CD8-positive, alpha-beta T cell (primary cell): ENCODE measurements at regions of chr15 and their contacts with region 1.

Region 1: DNA sequence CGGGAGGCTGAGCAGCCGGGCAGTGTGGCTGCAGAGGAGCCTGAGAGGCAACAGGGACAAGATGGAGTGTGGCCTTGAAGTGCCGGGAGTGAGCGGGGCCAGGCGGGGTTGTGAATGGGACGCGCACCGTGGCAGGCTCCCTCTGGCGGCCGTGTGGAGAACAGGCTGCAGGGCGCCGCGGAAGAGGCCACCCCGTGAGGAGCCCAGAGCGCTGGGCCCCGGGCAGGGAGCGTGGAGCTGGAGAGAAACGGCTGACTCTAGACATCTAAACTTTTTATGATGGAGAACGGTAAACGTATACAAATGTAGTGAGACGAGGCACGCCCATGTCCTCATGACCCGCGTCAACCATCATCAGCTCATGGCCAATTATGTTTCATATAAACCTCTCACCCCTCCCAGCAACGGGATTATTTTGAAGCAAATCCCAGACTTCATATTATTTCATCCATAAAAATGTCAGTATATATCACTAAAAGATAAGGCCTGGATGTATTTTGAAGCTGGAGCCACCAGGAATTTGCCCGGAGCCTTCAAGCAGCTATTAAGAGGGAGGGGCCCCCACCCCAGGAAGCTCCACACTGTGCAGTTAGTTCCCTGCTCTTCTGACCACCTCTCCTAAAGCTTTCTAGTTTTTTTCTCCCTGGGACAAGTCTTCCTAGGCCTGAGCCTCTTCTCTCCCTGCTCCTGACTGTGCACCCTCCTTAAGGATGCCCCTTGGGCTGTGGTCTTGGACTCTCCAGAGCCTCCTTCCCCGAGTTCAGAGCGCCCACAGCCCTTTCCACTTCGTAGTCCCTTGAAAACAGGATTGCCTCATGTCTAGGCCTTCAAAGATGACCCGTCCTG is 149.4 kb downstream of the SMAD6 start:
- DNase-seq: peak; percentile 48 to 80 (median 71)
- ATAC-seq: peak; percentile 98
- H3K4me3 ChIP-seq: no peak overlapping the region
- H3K4me3 Mint-ChIP-seq: peak overlapping the region; percentile 58
- H3K27ac ChIP-seq: no peak overlapping the region
- H3K27ac Mint-ChIP-seq: no peak overlapping the region
- H3K4me1 ChIP-seq: peaks cover 7% of the 10 kb centered on the region
- H3K4me1 Mint-ChIP-seq: peaks cover 9% of the 10 kb centered on the region
- H3K27me3 ChIP-seq: no peaks in the 10 kb centered on the region
- H3K27me3 Mint-ChIP-seq: peaks cover 17% of the 10 kb centered on the region
- CTCF ChIP-seq: peak; percentile 93

Region 2: DNA sequence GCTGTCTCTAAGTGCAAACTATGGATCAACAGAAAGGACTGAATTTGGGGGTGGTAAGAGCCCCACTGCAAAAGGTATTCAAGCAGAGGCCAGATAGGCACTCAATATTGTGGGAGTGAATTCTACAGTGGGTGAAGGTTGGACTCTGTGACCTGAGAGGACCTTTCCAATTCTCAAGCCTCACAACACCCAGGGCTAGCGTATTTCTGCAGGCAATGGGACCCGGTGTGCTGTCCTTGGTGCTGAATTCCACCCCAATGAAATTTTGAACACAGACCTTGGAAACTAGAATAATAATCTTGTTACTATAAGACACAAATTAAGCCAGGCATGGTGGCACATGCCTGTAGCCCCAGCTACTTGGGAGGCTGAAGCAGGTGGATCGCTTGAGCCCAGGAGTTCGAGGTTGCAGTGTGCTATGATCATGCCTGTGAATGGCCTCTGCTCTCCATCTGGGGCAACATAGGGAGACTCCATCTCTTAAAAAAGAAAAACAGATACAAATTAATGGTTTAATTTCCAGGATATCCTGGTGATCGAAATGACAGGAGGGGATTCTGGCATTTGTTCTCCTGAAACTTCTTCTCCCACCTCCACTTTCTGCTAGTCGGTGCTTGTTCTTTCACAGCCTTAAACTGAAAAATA is 846.7 kb before region 1 on chr15:
- CTCF ChIA-PET with region 1: no interaction called
- POLR2A ChIA-PET with region 1: no interaction called
- intact Hi-C with region 1: no loop called
- DNase-seq: no peak
- ATAC-seq: no peak
- H3K4me3 ChIP-seq: no peak overlapping the region
- H3K4me3 Mint-ChIP-seq: no peak overlapping the region
- H3K27ac ChIP-seq: no peak overlapping the region
- H3K27ac Mint-ChIP-seq: no peak overlapping the region
- H3K4me1 ChIP-seq: no peaks in the 10 kb centered on the region
- H3K4me1 Mint-ChIP-seq: no peaks in the 10 kb centered on the region
- H3K27me3 ChIP-seq: no peaks in the 10 kb centered on the region
- H3K27me3 Mint-ChIP-seq: peaks cover 28% of the 10 kb centered on the region
- CTCF ChIP-seq: no peak

Region 3: DNA sequence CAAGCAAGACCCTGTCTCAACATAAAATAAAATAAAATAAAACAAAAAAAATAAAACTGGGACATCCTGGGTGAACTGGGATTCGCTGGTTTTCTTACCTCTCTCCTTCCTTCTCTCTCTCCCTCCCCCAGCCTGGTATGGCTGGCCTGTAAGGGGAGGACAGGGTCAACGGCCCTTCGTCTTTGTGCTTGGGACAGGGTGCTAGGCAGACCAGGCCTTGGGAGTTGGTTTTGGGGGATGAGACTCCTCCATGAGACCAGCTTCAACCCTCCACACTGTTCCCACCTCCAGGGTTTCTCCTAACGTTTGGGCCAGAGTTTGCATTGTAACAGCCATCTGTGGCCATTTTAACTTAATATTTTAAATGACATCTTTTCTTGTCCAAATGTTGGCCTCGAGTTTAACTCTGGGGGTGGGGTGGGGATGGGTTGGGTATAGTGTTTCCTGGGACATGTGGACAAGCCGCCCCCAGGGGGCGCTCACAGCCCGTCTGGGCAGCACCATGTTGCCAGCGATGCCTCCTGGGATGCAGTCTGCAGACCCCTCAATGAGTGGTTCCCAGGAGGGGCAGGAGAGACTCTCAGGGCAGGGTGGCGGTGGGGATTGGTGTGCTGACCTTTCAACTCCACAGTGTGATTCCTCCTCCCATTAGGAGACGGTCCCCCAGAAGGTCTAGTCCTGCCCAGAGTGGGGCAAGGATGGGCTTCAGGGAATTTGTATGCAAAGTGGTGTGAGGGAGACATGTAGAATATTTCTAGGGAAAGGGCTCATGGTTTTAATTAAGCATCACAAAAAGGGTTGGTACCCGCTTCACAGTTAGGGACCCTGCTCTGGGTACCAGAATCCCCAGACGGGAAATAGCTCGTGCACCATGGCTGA is 247.9 kb before region 1 on chr15:
- CTCF ChIA-PET with region 1: interaction called, 48 read pairs
- POLR2A ChIA-PET with region 1: no interaction called
- intact Hi-C with region 1: loop called in 1 of 2 experiments (anchors 1 kb)
- DNase-seq: peak; percentile 23 to 76 (median 65)
- ATAC-seq: peak; percentile 48
- H3K4me3 ChIP-seq: no peak overlapping the region
- H3K4me3 Mint-ChIP-seq: no peak overlapping the region
- H3K27ac ChIP-seq: no peak overlapping the region
- H3K27ac Mint-ChIP-seq: no peak overlapping the region
- H3K4me1 ChIP-seq: peaks cover under 1% of the 10 kb centered on the region
- H3K4me1 Mint-ChIP-seq: peaks cover 1% of the 10 kb centered on the region
- H3K27me3 ChIP-seq: no peaks in the 10 kb centered on the region
- H3K27me3 Mint-ChIP-seq: peaks cover 5% of the 10 kb centered on the region
- CTCF ChIP-seq: peak; percentile 79

Region 4: GRCh38 chr15:66619151-66619903 is 232.1 kb before region 1 on chr15:
- CTCF ChIA-PET with region 1: interaction called, 17 read pairs
- POLR2A ChIA-PET with region 1: no interaction called
- intact Hi-C with region 1: no loop called
- DNase-seq: peak in 6 of 9 experiments; percentile 20 to 57 (median 31)
- ATAC-seq: no peak
- H3K4me3 ChIP-seq: no peak overlapping the region
- H3K4me3 Mint-ChIP-seq: no peak overlapping the region
- H3K27ac ChIP-seq: no peak overlapping the region
- H3K27ac Mint-ChIP-seq: no peak overlapping the region
- H3K4me1 ChIP-seq: no peaks in the 10 kb centered on the region
- H3K4me1 Mint-ChIP-seq: peaks cover 4% of the 10 kb centered on the region
- H3K27me3 ChIP-seq: peaks cover 0 to 5% of the 10 kb centered on the region in 2 experiments
- H3K27me3 Mint-ChIP-seq: peaks cover 14% of the 10 kb centered on the region
- CTCF ChIP-seq: peak; percentile 52

Region 5: DNA sequence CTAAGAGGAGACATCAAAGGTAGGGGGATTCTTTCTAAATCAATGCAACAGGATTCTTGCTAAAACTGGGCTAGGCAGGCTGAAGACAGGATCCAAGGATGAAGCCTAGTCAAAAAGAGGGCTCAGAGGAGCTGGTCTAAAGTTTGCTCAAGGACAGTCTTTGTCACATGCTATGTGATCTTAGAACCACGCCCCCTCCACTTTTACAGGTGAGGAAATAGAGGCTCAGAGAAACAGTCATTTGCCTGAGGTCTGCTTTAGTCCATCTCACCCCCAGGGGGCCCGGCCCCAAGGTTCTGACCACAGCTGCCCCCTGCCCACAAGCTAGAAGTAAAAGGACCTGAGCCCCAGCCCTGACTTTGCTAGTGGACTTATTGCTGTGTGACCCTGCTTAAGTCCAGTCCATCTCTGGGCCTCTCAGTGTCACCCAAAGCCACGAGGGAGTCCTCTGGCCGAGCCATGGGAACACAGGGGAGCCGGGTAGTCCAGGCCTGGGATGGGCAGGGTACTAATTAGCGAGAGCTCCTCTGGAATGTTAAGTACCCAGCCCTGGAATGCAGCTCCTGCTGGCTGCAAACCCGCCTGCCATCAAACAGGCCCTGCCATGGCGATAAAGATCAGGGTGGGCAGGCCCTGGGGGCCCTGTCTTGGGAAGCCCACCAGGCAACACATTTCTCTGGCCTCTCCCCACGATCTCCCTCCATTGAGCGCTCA is 16.7 kb before region 1 on chr15:
- CTCF ChIA-PET with region 1: interaction called, 11 read pairs
- POLR2A ChIA-PET with region 1: no interaction called
- intact Hi-C with region 1: no loop called
- DNase-seq: no peak
- ATAC-seq: no peak
- H3K4me3 ChIP-seq: no peak overlapping the region
- H3K4me3 Mint-ChIP-seq: no peak overlapping the region
- H3K27ac ChIP-seq: no peak overlapping the region
- H3K27ac Mint-ChIP-seq: no peak overlapping the region
- H3K4me1 ChIP-seq: no peaks in the 10 kb centered on the region
- H3K4me1 Mint-ChIP-seq: no peaks in the 10 kb centered on the region
- H3K27me3 ChIP-seq: no peaks in the 10 kb centered on the region
- H3K27me3 Mint-ChIP-seq: no peaks in the 10 kb centered on the region
- CTCF ChIP-seq: no peak

Region 6: GRCh38 chr15:66862878-66863335 is 11.5 kb after region 1 on chr15:
- CTCF ChIA-PET with region 1: interaction called, 20 read pairs
- POLR2A ChIA-PET with region 1: no interaction called
- intact Hi-C with region 1: no loop called
- DNase-seq: peak; percentile 50 to 78 (median 66)
- ATAC-seq: peak; percentile 85
- H3K4me3 ChIP-seq: no peak overlapping the region
- H3K4me3 Mint-ChIP-seq: no peak overlapping the region
- H3K27ac ChIP-seq: no peak overlapping the region
- H3K27ac Mint-ChIP-seq: no peak overlapping the region
- H3K4me1 ChIP-seq: no peaks in the 10 kb centered on the region
- H3K4me1 Mint-ChIP-seq: no peaks in the 10 kb centered on the region
- H3K27me3 ChIP-seq: peaks cover 0 to 3% of the 10 kb centered on the region in 2 experiments
- H3K27me3 Mint-ChIP-seq: peaks cover 47% of the 10 kb centered on the region
- CTCF ChIP-seq: peak; percentile 73

Region 7: GRCh38 chr15:66873856-66874255 is 22.4 kb after region 1 on chr15:
- CTCF ChIA-PET with region 1: interaction called, 10 read pairs
- POLR2A ChIA-PET with region 1: no interaction called
- intact Hi-C with region 1: no loop called
- DNase-seq: peak in 1 of 9 experiments; percentile 11
- ATAC-seq: no peak
- H3K4me3 ChIP-seq: no peak overlapping the region
- H3K4me3 Mint-ChIP-seq: no peak overlapping the region
- H3K27ac ChIP-seq: no peak overlapping the region
- H3K27ac Mint-ChIP-seq: no peak overlapping the region
- H3K4me1 ChIP-seq: no peaks in the 10 kb centered on the region
- H3K4me1 Mint-ChIP-seq: no peaks in the 10 kb centered on the region
- H3K27me3 ChIP-seq: no peaks in the 10 kb centered on the region
- H3K27me3 Mint-ChIP-seq: peaks cover 3% of the 10 kb centered on the region
- CTCF ChIP-seq: no peak

Region 8: DNA sequence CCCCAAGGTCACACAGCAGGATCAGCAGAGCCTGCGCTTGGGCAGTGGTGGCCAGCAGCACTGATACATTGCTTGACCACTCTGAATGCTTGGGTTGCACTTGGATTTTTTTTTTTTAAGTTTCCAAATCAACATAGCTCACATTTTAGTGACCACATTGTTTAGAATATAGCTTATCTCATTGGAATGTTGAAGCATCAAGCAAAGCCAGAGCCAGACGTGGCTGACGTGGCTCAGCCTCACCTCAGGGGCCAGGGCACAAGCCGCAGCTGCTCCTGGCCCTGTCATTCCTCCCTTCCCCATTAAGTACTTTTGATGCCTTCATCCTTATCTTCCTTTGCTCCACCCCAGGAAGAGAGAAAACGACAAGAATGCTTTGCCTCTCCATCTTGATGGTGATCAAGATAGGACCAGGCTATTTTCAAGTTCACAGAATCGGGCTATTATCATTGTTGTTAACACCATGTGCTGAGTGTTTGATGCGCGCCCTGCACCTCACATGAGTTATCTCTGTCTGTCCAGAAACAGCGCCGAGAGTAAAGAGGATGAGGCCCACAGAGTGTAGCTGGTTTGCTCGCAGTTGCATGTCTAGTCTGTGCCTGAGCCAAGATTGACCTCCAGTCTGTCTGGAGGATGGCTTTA is 327.2 kb after region 1 on chr15:
- CTCF ChIA-PET with region 1: no interaction called
- POLR2A ChIA-PET with region 1: no interaction called
- intact Hi-C with region 1: no loop called
- DNase-seq: no peak
- ATAC-seq: no peak
- H3K4me3 ChIP-seq: no peak overlapping the region
- H3K4me3 Mint-ChIP-seq: no peak overlapping the region
- H3K27ac ChIP-seq: no peak overlapping the region
- H3K27ac Mint-ChIP-seq: no peak overlapping the region
- H3K4me1 ChIP-seq: no peaks in the 10 kb centered on the region
- H3K4me1 Mint-ChIP-seq: peaks cover 16% of the 10 kb centered on the region
- H3K27me3 ChIP-seq: no peaks in the 10 kb centered on the region
- H3K27me3 Mint-ChIP-seq: no peaks in the 10 kb centered on the region
- CTCF ChIP-seq: no peak